ENCODE measurements at regions of chrX and their contacts with region 1.

Region 1: GRCh38 chrX:41759817-41760216 is 35.8 kb downstream of the GPR82 start:
- DNase-seq: peak; percentile 40
- CTCF ChIP-seq: peak; percentile 72

Region 2: GRCh38 chrX:41245641-41246040 is 514.2 kb before region 1 on chrX:
- in situ Hi-C with region 1: no loop called
- DNase-seq: no peak
- CTCF ChIP-seq: no peak

Region 3: DNA sequence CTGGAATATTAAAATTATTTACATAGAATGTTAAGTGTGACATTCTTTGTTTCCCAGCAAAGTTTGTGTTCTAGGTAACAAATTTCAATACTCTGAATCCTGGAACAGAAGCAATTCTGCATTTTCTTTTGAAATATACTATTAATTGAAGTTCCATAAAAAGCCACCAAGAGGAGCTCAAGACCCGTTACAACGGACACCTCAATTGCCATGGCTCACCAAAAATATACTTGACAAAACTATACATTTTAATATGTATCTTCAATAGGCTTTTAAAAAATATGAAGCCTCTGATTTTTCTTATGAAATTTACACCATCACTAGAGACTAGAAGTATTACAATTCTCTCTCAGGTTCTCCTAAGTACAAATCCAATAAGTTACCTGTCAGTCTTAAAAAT is 201.3 kb before region 1 on chrX:
- in situ Hi-C with region 1: loop called (anchors 10 kb)
- DNase-seq: peak; percentile 17
- CTCF ChIP-seq: peak; percentile 43

Region 4: DNA sequence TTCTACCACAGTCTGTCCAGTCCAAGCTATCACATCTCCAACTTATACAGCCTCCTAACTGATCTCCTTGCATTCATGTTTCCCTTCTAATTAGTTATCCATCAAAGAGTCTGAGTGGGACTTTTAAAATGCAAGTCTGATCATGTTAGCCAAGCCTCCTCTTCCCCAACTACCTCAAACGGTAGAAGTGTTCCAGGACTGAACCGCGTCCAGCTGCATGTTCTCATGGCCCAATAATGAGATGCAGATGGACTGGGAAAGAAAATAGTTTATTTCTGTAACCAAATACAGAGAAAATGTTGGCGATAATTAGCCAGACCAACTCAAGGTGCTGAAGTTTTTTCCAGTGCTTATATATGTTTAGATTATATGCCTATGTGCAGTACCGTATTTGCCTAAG is 1064.7 kb after region 1 on chrX:
- in situ Hi-C with region 1: no loop called
- DNase-seq: no peak
- CTCF ChIP-seq: no peak

Measured in GM13977 (cell line).